Activated B cell treated with CpG ODN at 0.5 μM for 24 hours (primary cell): ENCODE measurements at regions of chr9 and their contacts with region 1.

Region 1: GRCh38 chr9:71819115-71819739 is 50.9 kb upstream of the CEMIP2 start:
- DNase-seq: no peak
- ATAC-seq: no peak
- H3K4me3 Mint-ChIP-seq: no peak overlapping the region
- H3K27ac Mint-ChIP-seq: no peak overlapping the region
- H3K4me1 Mint-ChIP-seq: peaks cover 31% of the 10 kb centered on the region
- H3K27me3 Mint-ChIP-seq: no peaks in the 10 kb centered on the region
- CTCF ChIP-seq: peak; percentile 59

Region 2: DNA sequence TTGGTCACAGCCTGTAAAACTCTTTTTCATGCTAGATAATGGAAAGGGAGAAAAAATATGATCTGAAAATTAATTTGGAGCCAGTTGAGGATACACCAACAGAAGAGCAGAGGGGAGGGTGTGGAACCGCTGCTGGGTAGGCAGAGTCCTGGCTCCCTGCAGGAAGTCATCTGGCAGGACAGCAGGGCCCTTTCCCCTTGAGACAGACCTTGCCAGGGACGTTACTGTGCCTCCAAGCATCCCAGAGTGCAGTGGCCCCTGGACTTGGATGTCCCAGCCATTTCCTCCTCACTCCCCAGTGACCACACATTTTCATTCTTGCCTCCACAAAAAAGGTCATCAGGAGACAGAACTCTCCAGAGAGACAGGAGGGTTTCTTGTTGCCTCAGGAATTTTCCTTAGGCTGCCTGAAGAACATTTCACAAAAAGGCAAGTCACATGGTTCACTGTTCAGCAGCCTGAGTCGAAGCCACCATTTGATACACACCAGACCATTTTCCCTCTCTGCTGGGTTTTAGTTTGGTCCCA is 703.7 kb before region 1 on chr9:
- CTCF ChIA-PET with region 1: no interaction called
- POLR2A ChIA-PET with region 1: no interaction called
- intact Hi-C with region 1: no loop called
- DNase-seq: no peak
- ATAC-seq: no peak
- H3K4me3 Mint-ChIP-seq: no peak overlapping the region
- H3K27ac Mint-ChIP-seq: no peak overlapping the region
- H3K4me1 Mint-ChIP-seq: no peaks in the 10 kb centered on the region
- H3K27me3 Mint-ChIP-seq: peaks cover 3% of the 10 kb centered on the region
- CTCF ChIP-seq: no peak

Region 3: DNA sequence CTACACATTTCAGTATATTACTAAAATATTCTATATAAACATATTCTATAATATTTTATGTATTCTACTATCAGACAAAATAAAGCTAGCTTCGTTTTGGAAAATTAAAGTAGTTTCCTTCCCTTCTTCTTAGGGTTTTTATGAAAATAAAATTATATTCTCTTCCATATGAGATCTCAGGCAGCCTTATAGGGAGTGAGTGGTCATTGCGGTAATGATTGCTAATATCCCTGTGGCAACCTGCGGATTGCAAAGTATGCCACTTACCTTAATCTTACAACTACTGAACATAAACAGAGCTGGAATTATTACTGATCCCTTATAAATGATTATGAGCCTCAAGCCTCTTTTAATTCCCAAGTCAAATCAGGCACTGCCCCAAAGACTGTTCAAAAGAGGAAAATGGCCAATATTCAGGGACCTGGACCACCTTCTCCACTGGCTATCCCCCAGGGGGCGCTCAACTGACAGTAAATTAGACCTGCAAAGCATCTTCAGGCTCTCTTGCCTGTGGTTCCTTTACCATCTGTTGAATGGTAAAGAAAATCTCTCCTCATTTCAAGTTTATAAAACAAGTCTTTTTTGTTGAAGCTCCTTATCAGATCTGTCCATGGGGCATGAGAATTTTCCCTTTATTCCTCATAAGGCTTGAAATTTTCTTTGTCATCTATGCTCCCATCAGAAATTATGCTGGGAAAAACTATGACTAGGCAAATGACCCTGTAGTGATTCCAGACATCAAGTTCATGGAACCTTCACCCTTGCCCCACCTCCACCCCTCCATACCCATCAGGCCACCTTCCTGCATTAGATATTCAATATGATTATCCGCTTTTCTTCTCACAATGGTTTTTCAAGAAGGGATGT is 214.8 kb before region 1 on chr9:
- CTCF ChIA-PET with region 1: interaction called, 31 read pairs
- POLR2A ChIA-PET with region 1: no interaction called
- intact Hi-C with region 1: loop called (anchors 1 kb)
- DNase-seq: peak; percentile 46
- ATAC-seq: peak; percentile 78
- H3K4me3 Mint-ChIP-seq: no peak overlapping the region
- H3K27ac Mint-ChIP-seq: no peak overlapping the region
- H3K4me1 Mint-ChIP-seq: peaks cover 4% of the 10 kb centered on the region
- H3K27me3 Mint-ChIP-seq: no peaks in the 10 kb centered on the region
- CTCF ChIP-seq: peak; percentile 59

Region 4: GRCh38 chr9:71783120-71783530 is 36.1 kb before region 1 on chr9:
- CTCF ChIA-PET with region 1: interaction called, 52 read pairs
- POLR2A ChIA-PET with region 1: interaction called, 5 read pairs
- intact Hi-C with region 1: loop called (anchors 1 kb)
- DNase-seq: peak; percentile 37
- ATAC-seq: peak; percentile 83
- H3K4me3 Mint-ChIP-seq: peak overlapping the region; percentile 68
- H3K27ac Mint-ChIP-seq: peak overlapping the region; percentile 92
- H3K4me1 Mint-ChIP-seq: peaks cover 41% of the 10 kb centered on the region
- H3K27me3 Mint-ChIP-seq: no peaks in the 10 kb centered on the region
- CTCF ChIP-seq: no peak

Region 5: DNA sequence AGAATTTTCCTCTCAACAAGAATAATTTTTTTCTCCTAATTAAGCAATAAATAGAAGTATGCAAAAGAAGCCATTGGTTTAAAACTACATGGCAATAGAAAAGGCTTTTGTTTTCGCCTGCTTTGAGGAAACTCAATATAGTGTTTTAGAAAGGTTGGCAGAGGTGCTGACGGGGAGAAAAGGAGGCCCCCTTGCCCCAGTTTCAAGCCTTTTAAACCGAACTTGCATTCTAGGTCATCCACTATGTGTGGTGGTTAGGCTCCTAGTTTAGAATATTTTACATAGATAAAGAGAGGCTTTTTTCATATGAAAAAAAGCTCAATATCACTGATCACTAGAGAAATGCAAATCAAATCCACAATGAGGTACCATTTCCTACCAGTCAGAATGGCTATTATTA is 17.4 kb before region 1 on chr9:
- CTCF ChIA-PET with region 1: interaction called, 34 read pairs
- POLR2A ChIA-PET with region 1: interaction called, 7 read pairs
- intact Hi-C with region 1: loop called (anchors 1 kb)
- DNase-seq: no peak
- ATAC-seq: no peak
- H3K4me3 Mint-ChIP-seq: no peak overlapping the region
- H3K27ac Mint-ChIP-seq: no peak overlapping the region
- H3K4me1 Mint-ChIP-seq: peaks cover 36% of the 10 kb centered on the region
- H3K27me3 Mint-ChIP-seq: no peaks in the 10 kb centered on the region
- CTCF ChIP-seq: no peak

Region 6: GRCh38 chr9:72048850-72049249 is 229.6 kb after region 1 on chr9:
- CTCF ChIA-PET with region 1: no interaction called
- POLR2A ChIA-PET with region 1: no interaction called
- intact Hi-C with region 1: no loop called
- DNase-seq: no peak
- ATAC-seq: no peak
- H3K4me3 Mint-ChIP-seq: no peak overlapping the region
- H3K27ac Mint-ChIP-seq: no peak overlapping the region
- H3K4me1 Mint-ChIP-seq: no peaks in the 10 kb centered on the region
- H3K27me3 Mint-ChIP-seq: peaks cover 5% of the 10 kb centered on the region
- CTCF ChIP-seq: no peak